ENCODE measurements at regions of chr17 and their contacts with region 1.

Region 1: GRCh38 chr17:65100316-65101140 is 36.6 kb upstream of the RGS9 start:
- DNase-seq: peak; percentile 91
- ATAC-seq: peak; percentile 70
- H3K4me3 ChIP-seq: peak overlapping the region; percentile 76
- H3K27ac ChIP-seq: peak overlapping the region; percentile 92
- H3K4me1 ChIP-seq: peaks cover 44% of the 10 kb centered on the region
- H3K27me3 ChIP-seq: no peaks in the 10 kb centered on the region
- CTCF ChIP-seq: peak; percentile 92

Region 2: GRCh38 chr17:64975329-64976087 is 125.0 kb before region 1 on chr17:
- CTCF ChIA-PET with region 1: interaction called, 7 read pairs
- POLR2A ChIA-PET with region 1: interaction called, 4 read pairs
- intact Hi-C with region 1: loop called (anchors 2 kb)
- DNase-seq: peak; percentile 99
- ATAC-seq: peak; percentile 94
- H3K4me3 ChIP-seq: peak overlapping the region; percentile 92
- H3K27ac ChIP-seq: peak overlapping the region; percentile 83
- H3K4me1 ChIP-seq: peaks cover 23% of the 10 kb centered on the region
- H3K27me3 ChIP-seq: no peaks in the 10 kb centered on the region
- CTCF ChIP-seq: no peak

Region 3: DNA sequence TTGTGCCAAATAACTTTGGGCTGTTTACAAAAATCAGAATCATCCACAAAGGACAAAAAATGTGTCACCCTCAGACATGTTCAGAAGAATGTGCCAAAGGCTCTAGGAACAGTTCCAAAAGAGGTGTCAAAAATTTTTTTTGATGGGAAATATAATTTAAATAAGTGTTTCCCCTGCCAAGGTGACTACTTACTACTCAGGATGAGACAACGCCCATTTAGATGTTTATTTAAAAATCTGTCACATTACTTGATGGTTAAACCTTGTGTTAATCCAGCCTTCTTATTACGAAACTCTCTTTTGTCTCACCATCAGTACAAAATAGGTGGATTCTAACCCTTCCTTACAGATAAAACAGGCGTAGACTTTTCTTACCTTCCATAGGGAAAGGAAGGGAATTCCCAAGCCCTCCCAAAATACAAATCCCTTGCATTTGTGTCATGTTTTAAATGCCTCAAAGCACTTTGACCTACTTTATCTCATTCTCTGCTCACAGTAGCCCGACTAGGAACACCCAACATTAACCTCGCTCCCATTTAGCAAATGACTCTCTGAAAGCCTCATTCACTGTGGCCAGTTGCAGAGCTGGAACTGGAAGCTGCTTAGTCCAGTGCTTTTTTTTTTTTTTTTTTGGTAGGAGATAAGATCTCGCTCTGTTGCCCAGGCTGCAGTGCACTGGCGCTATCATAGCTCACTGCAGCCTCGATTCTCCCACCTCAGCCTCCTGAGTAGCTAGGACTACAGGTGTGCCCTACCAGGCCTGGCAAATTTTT is 38.2 kb before region 1 on chr17:
- CTCF ChIA-PET with region 1: no interaction called
- POLR2A ChIA-PET with region 1: interaction called, 38 read pairs
- intact Hi-C with region 1: loop called (anchors 1 kb)
- DNase-seq: peak; percentile 57
- ATAC-seq: peak; percentile 50
- H3K4me3 ChIP-seq: no peak overlapping the region; the same call in 1 of the 2 replicates
- H3K27ac ChIP-seq: peak overlapping the region; percentile 25
- H3K4me1 ChIP-seq: peaks cover 38% of the 10 kb centered on the region
- H3K27me3 ChIP-seq: no peaks in the 10 kb centered on the region
- CTCF ChIP-seq: no peak

Region 4: DNA sequence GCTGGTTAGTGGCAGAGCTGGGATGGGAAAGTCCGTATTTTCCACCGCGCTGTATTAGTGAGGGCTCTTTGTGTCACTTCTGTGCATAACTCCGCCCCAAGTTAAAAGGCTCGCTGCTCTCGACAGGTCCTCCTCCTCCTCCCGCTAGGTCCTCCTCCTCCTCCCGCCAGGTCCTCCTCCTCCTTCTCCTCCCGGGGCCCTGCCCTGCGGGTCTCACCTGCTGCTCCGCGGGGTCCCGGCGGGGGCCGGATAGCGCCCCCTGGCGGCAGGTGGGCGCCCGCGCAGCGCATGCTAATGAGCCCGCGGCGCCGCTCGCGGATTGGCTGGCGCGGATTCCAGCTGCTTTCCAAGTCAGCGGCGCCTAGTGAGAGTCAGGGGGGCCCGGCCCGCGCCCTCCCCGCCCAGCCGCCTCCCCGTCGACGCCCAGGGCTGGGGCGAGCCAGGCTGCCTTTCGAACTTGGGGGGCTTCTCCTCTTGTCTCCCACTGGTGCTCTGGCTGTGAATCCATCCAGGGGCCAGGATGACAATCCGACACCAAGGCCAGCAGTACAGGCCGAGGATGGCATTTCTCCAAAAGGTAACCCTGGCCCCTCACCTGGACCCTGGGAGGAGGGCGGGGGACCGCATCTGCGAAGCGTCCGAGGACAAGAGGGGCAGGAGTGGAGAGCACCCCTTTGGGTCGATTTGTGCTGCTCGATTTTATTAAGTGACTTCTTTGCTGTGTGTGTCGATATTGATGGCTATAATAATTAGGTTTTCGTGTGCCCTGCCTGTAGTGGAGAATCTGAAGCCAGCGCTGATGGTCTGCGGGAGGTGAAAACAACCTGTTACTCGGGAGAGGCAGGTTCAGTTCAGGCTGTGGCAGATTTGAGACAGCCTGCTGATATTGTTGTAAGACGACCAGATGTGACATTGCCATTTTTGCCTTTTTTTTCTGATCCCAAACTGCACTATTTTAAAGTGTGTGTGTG is 36.8 kb after region 1 on chr17 and contains the start of gene RGS9:
- CTCF ChIA-PET with region 1: interaction called, 3 read pairs
- POLR2A ChIA-PET with region 1: no interaction called
- intact Hi-C with region 1: loop called (anchors 5 kb)
- DNase-seq: peak; percentile 90
- ATAC-seq: peak; percentile 89
- H3K4me3 ChIP-seq: peak within 1 kb of the TSS; percentile 64
- H3K27ac ChIP-seq: no peak within 1 kb of the TSS
- H3K4me1 ChIP-seq: peaks cover 15% of the 10 kb centered on the region; the same call in 1 of the 2 replicates
- H3K27me3 ChIP-seq: no peaks in the 10 kb centered on the region
- CTCF ChIP-seq: peak; percentile 95
- total RNA-seq, gene RGS9: 2.7 and 3.4 TPM in 2 replicates

Measured in PC-3 (cell line).